ENCODE measurements at regions of chr1 and their contacts with region 1.

Region 1: DNA sequence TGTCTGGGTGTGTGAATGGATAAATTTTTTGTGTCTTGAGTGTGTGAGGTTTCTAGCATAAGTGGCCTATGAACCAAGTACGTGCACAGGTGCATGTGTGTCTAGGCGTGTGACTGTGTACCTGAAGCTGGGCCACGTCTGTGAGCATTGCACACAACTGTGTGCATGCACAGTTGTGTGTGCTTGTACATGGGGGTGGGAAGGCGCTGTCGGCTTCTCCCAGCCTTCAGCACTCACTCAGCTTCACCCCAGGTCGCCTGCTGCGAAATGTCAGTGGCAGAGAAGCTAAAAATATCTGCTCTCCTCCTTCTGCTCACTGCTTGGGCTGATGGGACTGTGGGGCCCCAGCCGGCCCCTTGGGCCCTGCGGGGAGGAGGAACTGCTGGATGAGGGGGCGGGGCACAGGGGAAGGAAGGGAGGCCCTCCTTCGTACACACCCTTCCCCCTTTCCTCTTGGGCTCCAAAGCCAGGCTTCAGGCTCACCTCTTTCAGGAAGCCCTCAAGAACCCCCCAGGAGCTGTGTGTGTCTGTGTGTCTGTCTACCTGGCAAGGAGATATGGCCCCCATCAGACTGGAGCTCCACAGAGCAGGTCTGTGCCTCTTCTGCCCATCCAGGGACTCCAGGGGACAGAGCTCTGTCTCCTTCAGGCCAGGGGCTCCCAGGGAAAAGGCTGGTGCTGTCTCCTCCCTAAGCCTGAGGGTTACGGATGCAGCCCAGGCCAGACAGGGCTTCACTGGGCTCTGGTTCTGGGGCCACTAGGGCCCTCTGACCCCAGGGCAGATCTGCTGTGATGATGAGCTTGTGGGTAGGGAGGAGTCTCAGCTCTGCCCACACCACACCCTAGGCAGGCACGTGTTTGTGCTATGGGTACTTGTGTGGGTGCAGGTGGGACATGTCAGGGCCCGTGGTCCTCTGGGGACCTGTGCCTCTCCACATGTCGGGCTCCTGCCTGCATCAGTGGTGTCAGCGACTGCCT is 35.6 kb upstream of the WASF2 start:
- DNase-seq: peak; percentile 73
- H3K4me3 Mint-ChIP-seq: peak overlapping the region; percentile 68
- H3K27ac Mint-ChIP-seq: peak overlapping the region; percentile 61
- H3K4me1 Mint-ChIP-seq: peaks cover 70% of the 10 kb centered on the region
- H3K27me3 Mint-ChIP-seq: peaks cover 4% of the 10 kb centered on the region

Region 2: DNA sequence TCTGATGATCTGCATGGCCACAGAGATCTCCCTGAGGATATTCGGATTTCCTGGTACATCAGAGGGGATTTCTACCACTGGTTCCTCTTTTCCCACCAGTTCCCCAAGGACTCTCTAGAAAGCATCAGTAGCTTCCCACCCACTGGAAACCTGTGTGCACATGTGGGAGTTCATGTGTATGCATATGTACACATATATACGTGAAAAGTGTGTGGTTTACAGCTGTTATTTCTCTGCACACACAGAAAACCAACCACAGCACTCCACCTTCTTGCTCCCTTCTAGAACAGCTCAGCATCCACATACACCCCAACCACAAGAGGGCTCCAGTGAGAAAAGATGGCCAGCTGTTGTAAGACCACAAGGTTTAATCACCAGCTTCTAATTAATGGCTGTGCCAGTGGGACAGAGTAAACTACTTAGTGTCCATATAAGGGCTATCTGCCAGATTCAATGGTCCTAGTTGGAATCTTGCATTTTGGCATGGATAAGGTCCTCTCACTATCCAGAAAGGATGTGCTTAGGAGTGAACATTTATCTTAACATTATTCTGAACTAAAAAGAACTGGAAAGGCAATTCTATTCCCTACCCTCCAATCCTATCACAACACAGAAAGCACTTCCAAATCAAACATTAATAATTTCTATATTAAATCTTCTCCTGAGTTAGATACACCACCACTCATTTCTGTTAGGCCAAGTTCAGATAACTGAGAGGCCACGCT is 109.0 kb before region 1 on chr1:
- CTCF ChIA-PET with region 1: interaction called, 17 read pairs
- POLR2A ChIA-PET with region 1: no interaction called
- DNase-seq: peak; percentile 63
- H3K4me3 Mint-ChIP-seq: no peak overlapping the region
- H3K27ac Mint-ChIP-seq: peak overlapping the region; percentile 25
- H3K4me1 Mint-ChIP-seq: peaks cover 43% of the 10 kb centered on the region
- H3K27me3 Mint-ChIP-seq: no peaks in the 10 kb centered on the region

Region 3: GRCh38 chr1:27568300-27569087 is 42.9 kb after region 1 on chr1:
- CTCF ChIA-PET with region 1: interaction called, 12 read pairs
- POLR2A ChIA-PET with region 1: interaction called, 5 read pairs
- DNase-seq: peak; percentile 96
- H3K4me3 Mint-ChIP-seq: peak overlapping the region; percentile 73
- H3K27ac Mint-ChIP-seq: no peak overlapping the region
- H3K4me1 Mint-ChIP-seq: peaks cover 24% of the 10 kb centered on the region
- H3K27me3 Mint-ChIP-seq: peaks cover 6% of the 10 kb centered on the region

Region 4: DNA sequence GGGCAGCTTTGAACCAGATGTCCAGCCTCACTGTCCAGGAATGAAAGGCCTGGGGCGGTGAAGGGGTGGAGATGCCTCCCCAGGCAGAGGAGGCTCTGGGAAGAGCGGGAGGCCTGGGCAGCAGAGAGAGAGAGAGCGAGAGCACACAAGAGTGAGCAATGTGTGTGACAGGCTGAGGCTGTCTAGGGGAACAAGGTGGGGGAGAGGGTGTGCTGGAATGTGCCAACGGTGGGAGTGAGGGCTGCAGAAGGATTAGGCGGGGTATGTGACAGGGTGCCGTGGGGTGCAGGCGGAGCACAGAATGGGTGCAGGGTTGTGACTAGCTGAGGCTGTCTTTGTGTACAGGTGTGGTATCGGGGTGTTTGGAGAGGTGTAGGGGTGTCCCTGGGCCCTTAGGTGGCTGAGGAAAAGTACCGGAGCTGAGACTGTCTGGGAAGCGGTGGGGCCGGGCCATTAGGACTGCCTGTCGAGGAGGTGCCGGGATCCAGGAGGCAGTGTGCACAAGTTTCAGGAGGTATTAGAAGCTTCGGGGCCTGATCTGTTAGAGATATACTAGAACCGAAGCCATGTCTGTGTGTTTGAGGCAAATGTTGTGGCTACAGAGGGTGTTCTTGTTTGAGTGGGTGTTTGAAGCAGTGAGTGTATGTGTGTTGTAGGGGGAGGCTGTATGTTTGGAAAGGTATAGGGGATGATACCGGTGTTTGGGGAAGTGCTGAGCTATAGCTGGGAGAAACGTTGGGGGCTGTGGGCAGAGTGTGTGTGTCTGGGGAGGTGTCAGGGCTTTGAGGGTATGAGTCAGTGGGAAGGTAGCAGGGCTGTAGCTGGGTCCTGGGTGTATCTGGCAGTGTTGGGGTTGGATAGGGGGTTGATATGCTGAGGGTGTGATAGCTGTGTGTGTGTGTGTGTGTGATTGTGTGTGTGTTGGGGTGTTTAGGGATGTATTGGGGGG is 69.3 kb after region 1 on chr1:
- CTCF ChIA-PET with region 1: interaction called, 11 read pairs
- POLR2A ChIA-PET with region 1: interaction called, 5 read pairs
- DNase-seq: no peak
- H3K4me3 Mint-ChIP-seq: no peak overlapping the region
- H3K27ac Mint-ChIP-seq: no peak overlapping the region
- H3K4me1 Mint-ChIP-seq: peaks cover 32% of the 10 kb centered on the region
- H3K27me3 Mint-ChIP-seq: no peaks in the 10 kb centered on the region

Region 5: GRCh38 chr1:27760426-27760825 is 234.8 kb after region 1 on chr1:
- CTCF ChIA-PET with region 1: no interaction called
- POLR2A ChIA-PET with region 1: no interaction called
- DNase-seq: no peak
- H3K4me3 Mint-ChIP-seq: no peak overlapping the region
- H3K27ac Mint-ChIP-seq: no peak overlapping the region
- H3K4me1 Mint-ChIP-seq: no peaks in the 10 kb centered on the region
- H3K27me3 Mint-ChIP-seq: no peaks in the 10 kb centered on the region

Measured in activated CD4-positive, alpha-beta memory T cell treated with anti-CD3 and anti-CD28 coated beads, Interleukin-2, amount 10 ng/mL, durations not matched to agents 7 days and 5 days (primary cell).